Activated B cell treated with CpG ODN at 0.5 μM for 24 hours (primary cell): ENCODE measurements at regions of chr10 and their contacts with region 1.

Region 1: GRCh38 chr10:32346134-32346550 is 816 bp downstream of the EPC1 start:
- DNase-seq: peak; percentile 93
- ATAC-seq: peak; percentile 84
- H3K4me3 Mint-ChIP-seq: peak overlapping the region; percentile 96
- H3K27ac Mint-ChIP-seq: peak overlapping the region; percentile 100
- H3K4me1 Mint-ChIP-seq: peaks cover 72% of the 10 kb centered on the region
- H3K27me3 Mint-ChIP-seq: no peaks in the 10 kb centered on the region
- CTCF ChIP-seq: peak; percentile 67

Region 2: DNA sequence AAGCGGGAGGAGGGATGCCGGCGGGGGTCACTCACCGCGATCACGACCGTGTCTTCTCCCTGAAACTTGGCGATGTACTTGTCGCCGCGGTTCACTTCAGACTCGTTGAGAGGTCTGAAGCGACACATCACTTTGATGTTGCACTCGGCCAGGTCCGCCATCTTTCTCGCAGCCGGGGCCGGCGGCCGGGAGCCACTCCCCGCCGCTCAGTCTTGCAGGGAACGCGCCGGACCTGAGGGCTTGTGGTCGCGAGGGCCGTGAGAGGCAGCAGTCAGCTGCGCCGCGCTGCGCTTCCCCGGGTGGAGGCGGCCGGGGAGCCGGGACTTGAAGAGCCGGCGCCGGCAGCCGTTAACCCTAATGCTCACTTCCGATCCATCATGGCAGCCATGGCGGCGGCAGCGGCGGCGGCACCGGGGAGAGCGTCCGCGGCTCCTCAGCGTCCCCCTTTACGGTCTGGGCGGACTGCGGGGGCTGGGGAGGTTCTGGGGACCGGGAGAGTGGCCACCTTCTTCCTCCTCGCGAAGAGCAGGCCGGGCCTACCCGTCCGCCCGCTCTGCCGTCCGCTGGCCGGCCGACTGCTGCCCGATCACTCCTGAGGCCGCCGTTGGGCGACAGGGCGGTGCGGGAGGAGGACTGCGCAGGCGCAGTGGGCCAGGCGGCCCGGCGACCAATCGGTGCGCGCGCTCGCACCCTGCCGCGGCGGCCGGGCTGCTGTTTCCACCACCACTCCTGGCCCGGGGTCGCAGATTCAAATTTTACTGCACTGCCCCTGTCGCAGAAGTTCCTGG is 290.1 kb before region 1 on chr10 and contains the start of gene KIF5B:
- CTCF ChIA-PET with region 1: no interaction called
- POLR2A ChIA-PET with region 1: interaction called, 3 read pairs
- intact Hi-C with region 1: loop called (anchors 1 kb)
- DNase-seq: peak; percentile 90
- ATAC-seq: peak; percentile 86
- H3K4me3 Mint-ChIP-seq: peak within 1 kb of the TSS; percentile 96
- H3K27ac Mint-ChIP-seq: peak within 1 kb of the TSS; percentile 90
- H3K4me1 Mint-ChIP-seq: peaks cover 56% of the 10 kb centered on the region
- H3K27me3 Mint-ChIP-seq: no peaks in the 10 kb centered on the region
- CTCF ChIP-seq: no peak
- total RNA-seq, gene KIF5B: 44.2 and 45.0 TPM in 2 replicates

Region 3: GRCh38 chr10:32256613-32257437 is 89.3 kb before region 1 on chr10:
- CTCF ChIA-PET with region 1: interaction called, 9 read pairs
- POLR2A ChIA-PET with region 1: interaction called, 8 read pairs
- intact Hi-C with region 1: loop called (anchors 1 kb)
- DNase-seq: peak; percentile 52
- ATAC-seq: peak; percentile 88
- H3K4me3 Mint-ChIP-seq: no peak overlapping the region
- H3K27ac Mint-ChIP-seq: no peak overlapping the region
- H3K4me1 Mint-ChIP-seq: peaks cover 6% of the 10 kb centered on the region
- H3K27me3 Mint-ChIP-seq: no peaks in the 10 kb centered on the region
- CTCF ChIP-seq: peak; percentile 20

Region 4: DNA sequence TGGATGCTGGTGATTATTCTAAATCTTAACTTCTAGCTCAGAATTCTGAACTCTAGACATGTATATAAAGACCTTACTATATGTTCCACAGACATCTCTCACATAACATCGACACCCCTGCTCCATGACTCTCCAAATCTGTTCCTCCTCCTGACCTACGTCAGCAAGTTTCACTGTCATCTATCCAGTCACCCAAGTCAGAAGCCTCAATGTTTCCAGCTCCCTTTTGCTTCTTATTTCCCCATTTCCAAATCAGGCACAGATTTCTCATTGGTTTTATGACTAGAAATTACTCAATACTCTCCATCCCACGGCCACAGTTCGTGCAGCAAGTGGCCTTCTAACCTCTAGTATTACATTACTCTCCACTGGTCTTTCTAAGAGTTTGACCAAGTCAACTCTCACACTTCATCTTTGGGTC is 27.7 kb before region 1 on chr10:
- CTCF ChIA-PET with region 1: interaction called, 6 read pairs
- POLR2A ChIA-PET with region 1: interaction called, 4 read pairs
- intact Hi-C with region 1: loop called (anchors 1 kb)
- DNase-seq: no peak
- ATAC-seq: peak; percentile 50
- H3K4me3 Mint-ChIP-seq: peak overlapping the region; percentile 50
- H3K27ac Mint-ChIP-seq: peak overlapping the region; percentile 76
- H3K4me1 Mint-ChIP-seq: peaks cover 90% of the 10 kb centered on the region
- H3K27me3 Mint-ChIP-seq: no peaks in the 10 kb centered on the region
- CTCF ChIP-seq: no peak

Region 5: DNA sequence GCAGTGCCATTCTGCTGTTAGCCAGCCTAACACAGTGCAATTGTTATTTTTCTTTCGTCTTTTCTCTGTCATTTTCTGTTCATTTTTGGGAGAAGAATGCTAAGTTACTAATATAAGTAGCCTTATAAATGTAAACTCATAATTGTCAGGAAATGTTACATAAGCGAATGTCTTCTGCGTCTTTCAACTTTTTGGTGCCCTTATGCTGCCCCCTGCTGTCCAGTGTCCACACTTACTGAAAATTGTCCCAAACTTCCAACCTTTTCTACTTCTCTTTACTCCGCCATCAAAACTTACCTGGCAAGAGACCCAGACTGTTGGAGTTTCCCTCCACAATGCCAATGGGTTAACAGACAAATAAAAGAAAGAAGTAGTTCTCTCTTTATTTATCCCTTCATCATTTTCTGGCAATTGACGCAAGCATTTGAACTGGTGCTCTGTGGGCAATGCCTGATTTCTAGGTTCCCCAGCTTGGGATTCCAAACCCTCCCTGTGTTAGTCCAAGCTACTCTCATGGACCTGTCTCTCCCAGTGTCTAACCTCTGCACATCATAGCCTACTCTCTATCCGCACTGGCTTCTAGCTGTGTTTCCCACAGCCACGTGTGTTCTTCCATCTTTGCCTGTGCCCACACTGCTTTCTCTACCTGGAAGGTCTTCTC is 21.8 kb after region 1 on chr10:
- CTCF ChIA-PET with region 1: interaction called, 9 read pairs
- POLR2A ChIA-PET with region 1: interaction called, 4 read pairs
- intact Hi-C with region 1: loop called (anchors 1 kb)
- DNase-seq: peak; percentile 47
- ATAC-seq: peak; percentile 67
- H3K4me3 Mint-ChIP-seq: no peak overlapping the region
- H3K27ac Mint-ChIP-seq: no peak overlapping the region
- H3K4me1 Mint-ChIP-seq: peaks cover 22% of the 10 kb centered on the region
- H3K27me3 Mint-ChIP-seq: no peaks in the 10 kb centered on the region
- CTCF ChIP-seq: peak; percentile 65

Region 6: DNA sequence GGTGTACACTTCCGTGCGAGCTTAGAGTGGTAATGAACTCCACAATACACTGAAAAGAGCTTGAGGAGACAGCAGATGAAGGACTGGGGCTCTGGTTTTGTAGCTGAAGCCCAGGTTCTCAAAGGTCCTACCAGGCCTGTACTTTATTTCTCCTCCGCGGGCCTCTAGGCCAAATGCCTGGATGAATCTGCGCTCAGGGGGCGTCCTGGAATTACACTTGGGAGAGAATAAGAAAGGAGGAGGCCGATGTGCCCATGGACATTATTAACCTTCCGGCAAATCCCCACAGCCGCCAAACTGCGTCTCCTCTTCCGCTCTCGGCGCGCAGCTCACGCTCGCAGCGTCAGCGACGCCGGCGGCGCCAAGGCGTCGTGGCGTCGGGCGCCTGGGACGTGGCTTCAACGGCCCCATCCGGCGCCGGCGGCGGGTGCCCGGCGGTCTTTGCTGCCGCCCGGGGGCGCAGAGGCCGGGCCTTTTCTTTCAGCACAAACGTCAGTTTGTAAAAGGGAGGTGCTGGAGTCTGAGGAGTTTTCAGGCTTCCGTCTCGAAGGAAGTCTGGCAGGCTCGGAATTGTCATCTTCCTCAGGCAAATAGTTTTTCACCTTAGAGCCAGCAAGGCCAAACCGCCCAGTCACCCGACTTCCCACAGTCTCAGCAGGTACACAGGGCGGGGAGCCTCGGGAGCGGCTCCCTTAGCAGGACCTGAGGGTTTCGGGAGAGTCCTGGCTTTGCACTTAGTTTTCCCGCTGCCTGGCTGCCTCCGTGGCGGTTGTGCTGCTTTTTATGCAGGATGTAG is 99.8 kb after region 1 on chr10 and contains the start of gene CCDC7:
- CTCF ChIA-PET with region 1: no interaction called
- POLR2A ChIA-PET with region 1: interaction called, 6 read pairs
- intact Hi-C with region 1: loop called (anchors 1 kb)
- DNase-seq: peak; percentile 83
- ATAC-seq: peak; percentile 98
- H3K4me3 Mint-ChIP-seq: peak within 1 kb of the TSS; percentile 98
- H3K27ac Mint-ChIP-seq: peak within 1 kb of the TSS; percentile 99
- H3K4me1 Mint-ChIP-seq: peaks cover 15% of the 10 kb centered on the region
- H3K27me3 Mint-ChIP-seq: peaks cover 6% of the 10 kb centered on the region
- CTCF ChIP-seq: no peak
- total RNA-seq, gene CCDC7: 16.8 and 20.0 TPM in 2 replicates